ENCODE measurements at regions of chr10 and their contacts with region 1.

Region 1: GRCh38 chr10:97210543-97210961 is 24.8 kb upstream of the SLIT1 start:
- H3K4me3 ChIP-seq: no peak overlapping the region
- H3K27ac ChIP-seq: no peak overlapping the region
- H3K4me1 ChIP-seq: no peaks in the 10 kb centered on the region
- CTCF ChIP-seq: peak; percentile 72

Region 2: GRCh38 chr10:97025613-97026242 is 184.8 kb before region 1 on chr10:
- CTCF ChIA-PET with region 1: interaction called, 12 read pairs
- POLR2A ChIA-PET with region 1: no interaction called
- H3K4me3 ChIP-seq: no peak overlapping the region
- H3K27ac ChIP-seq: no peak overlapping the region
- H3K4me1 ChIP-seq: peaks cover 11% of the 10 kb centered on the region; the same call in 1 of the 2 replicates
- CTCF ChIP-seq: peak; percentile 38; the same call in 1 of the 2 replicates

Region 3: DNA sequence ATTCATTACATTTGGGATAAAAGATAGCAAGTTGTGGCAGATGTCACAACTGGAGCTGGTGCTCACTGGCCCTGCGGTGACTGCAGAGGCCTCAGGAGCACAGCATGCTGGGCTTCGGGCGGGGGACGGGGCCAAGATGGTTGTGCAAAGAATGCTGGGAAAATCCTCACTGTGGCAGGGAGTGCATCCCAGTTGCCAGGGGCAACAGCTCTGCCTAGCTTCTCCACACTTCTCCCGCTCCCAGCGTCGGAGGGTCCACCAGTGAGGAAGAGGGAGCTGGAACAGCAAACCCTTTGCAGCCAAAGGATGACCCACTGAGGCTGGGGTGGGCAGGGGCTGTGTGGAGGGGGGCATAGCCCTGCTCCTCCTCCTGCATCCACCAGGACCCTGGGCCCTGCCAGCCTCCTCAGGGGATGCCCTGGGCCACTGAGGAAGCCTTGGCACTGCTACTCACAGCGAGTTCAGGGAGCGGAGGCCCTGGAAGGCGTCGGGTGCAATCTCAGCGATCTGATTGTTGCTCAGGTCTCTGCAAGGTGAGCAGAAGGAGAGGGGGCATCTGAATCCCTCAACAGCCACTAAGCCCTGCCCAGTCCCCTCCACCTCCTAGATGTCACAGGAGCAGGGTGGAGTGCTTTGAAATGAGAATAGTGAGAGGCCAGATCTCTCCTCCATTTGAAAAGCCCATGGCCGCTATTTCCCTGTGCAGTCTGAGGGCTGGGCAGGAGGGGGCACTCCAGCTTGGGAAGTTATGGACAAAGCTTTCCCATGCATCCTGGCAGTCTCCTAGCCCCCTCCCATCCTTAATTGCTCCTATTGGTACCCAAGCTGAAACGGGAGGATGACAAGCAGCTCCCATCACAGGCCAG is 151.3 kb before region 1 on chr10:
- CTCF ChIA-PET with region 1: interaction called, 12 read pairs
- POLR2A ChIA-PET with region 1: no interaction called
- H3K4me3 ChIP-seq: no peak overlapping the region
- H3K27ac ChIP-seq: no peak overlapping the region
- H3K4me1 ChIP-seq: no peaks in the 10 kb centered on the region
- CTCF ChIP-seq: no peak

Region 4: GRCh38 chr10:97081621-97082235 is 128.8 kb before region 1 on chr10:
- CTCF ChIA-PET with region 1: interaction called, 66 read pairs
- POLR2A ChIA-PET with region 1: no interaction called
- H3K4me3 ChIP-seq: no peak overlapping the region
- H3K27ac ChIP-seq: no peak overlapping the region
- H3K4me1 ChIP-seq: no peaks in the 10 kb centered on the region
- CTCF ChIP-seq: peak; percentile 77

Region 5: GRCh38 chr10:97185326-97186058 is 25.1 kb before region 1 on chr10 and contains the start of gene SLIT1:
- CTCF ChIA-PET with region 1: interaction called, 170 read pairs
- POLR2A ChIA-PET with region 1: no interaction called
- H3K4me3 ChIP-seq: peak within 1 kb of the TSS; percentile 32
- H3K27ac ChIP-seq: peak within 1 kb of the TSS; percentile 41; the same call in 1 of the 2 replicates
- H3K4me1 ChIP-seq: peaks cover 3% of the 10 kb centered on the region; the same call in 1 of the 2 replicates
- CTCF ChIP-seq: peak; percentile 70; the same call in 1 of the 2 replicates

Region 6: DNA sequence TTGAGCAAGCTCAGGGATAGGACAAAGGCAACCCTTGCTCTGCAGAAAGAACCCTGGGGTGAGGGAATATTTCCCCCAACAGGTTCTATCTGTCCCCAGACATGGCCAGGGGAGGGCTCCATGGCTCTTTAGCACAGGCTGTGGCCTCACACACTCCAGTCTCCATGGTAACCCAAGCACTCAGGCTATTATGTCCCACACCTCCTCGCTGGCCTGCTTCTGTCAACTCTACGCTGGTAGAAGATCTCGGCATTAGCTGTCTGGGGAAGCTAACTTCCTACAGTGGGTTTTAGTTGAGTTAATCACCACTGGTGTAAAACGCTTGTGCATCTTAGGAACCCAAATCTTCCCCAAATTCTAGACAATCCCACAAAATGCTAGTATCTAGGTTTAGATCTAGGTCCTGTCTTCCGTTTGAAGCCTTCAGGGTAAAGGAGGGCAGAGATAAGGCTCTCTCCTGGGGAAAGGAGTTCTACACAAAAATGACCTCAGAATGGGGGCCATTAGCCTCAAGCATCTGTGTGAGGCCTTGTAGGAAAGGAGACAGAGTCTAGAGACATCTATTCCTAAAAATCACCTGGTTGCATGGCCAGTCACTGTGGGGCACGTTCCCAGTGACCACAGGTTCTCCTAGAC is 11.9 kb after region 1 on chr10:
- CTCF ChIA-PET with region 1: interaction called, 40 read pairs
- POLR2A ChIA-PET with region 1: no interaction called
- H3K4me3 ChIP-seq: no peak overlapping the region
- H3K27ac ChIP-seq: no peak overlapping the region
- H3K4me1 ChIP-seq: no peaks in the 10 kb centered on the region
- CTCF ChIP-seq: 0 out of 2 replicates have a peak, but pooled peaks have one; percentile 24

Measured in HEK293 (cell line).